ENCODE measurements at regions of chr2 and their contacts with region 1.

Region 1: DNA sequence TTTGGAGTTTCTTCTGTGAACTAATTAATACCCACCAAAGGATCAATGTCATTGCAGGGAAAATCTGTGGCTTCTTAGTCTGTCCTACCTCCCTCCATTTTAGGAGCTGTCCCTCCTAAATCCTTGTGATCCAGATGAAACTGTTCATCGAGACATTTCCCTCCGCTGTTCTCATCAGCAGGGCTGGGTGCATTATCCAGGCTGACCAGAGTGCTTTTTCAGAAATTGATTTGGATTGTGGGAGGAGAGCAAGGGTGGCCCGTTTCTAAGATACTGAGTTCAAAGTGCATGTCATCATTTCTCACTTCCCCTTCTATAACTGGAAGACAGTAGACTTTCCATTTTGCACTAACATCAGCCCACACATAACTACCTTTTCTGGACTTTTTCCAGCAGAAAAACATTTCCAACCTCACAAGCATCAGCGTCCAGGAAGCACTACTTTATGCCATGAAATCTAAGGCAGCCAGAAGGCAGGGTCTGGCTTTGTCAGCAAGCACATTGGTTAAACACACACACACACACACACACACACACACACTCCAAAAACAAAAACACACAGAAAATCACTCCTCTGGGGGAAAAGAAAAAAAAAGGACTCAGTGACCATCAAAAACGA is 94.1 kb downstream of the ANKRD44 start:
- DNase-seq: no peak
- H3K4me3 Mint-ChIP-seq: peak overlapping the region; percentile 62
- H3K27ac Mint-ChIP-seq: peak overlapping the region; percentile 94
- H3K4me1 Mint-ChIP-seq: peaks cover 86% of the 10 kb centered on the region
- H3K27me3 Mint-ChIP-seq: no peaks in the 10 kb centered on the region

Region 2: GRCh38 chr2:196160101-196160500 is 1056.4 kb before region 1 on chr2:
- CTCF ChIA-PET with region 1: no interaction called
- POLR2A ChIA-PET with region 1: no interaction called
- intact Hi-C with region 1: loop called (anchors 10 kb)
- DNase-seq: peak; percentile 76
- H3K4me3 Mint-ChIP-seq: peak overlapping the region; percentile 39
- H3K27ac Mint-ChIP-seq: peak overlapping the region; percentile 96
- H3K4me1 Mint-ChIP-seq: peaks cover 77% of the 10 kb centered on the region
- H3K27me3 Mint-ChIP-seq: no peaks in the 10 kb centered on the region

Region 3: DNA sequence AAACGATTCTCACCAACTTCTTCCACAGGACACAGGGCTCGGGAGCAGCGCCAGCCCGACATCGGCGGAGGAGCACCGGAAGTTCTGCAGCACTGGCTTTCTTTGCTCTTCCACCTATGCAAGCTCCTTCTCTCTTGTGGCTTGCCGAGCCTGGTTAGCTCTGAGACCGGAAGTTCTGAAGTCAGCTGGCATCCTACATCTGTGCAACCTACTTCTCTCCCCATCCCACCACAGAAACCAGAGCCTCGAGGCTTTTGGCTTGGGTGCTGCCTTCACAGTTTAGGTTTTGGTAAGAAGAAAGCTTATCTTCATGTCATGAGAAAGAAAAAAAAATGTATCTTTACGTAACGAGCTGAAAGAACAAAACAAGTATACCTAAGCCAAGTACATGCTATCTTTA is 17.6 kb before region 1 on chr2:
- CTCF ChIA-PET with region 1: interaction called, 7 read pairs
- POLR2A ChIA-PET with region 1: interaction called, 10 read pairs
- intact Hi-C with region 1: loop called (anchors 2 kb)
- DNase-seq: peak; percentile 95
- H3K4me3 Mint-ChIP-seq: peak overlapping the region; percentile 80
- H3K27ac Mint-ChIP-seq: peak overlapping the region; percentile 93
- H3K4me1 Mint-ChIP-seq: peaks cover 90% of the 10 kb centered on the region
- H3K27me3 Mint-ChIP-seq: no peaks in the 10 kb centered on the region

Region 4: GRCh38 chr2:197229509-197230443 is 13.3 kb after region 1 on chr2:
- CTCF ChIA-PET with region 1: interaction called, 4 read pairs
- POLR2A ChIA-PET with region 1: interaction called, 5 read pairs
- intact Hi-C with region 1: loop called (anchors 1 kb)
- DNase-seq: no peak
- H3K4me3 Mint-ChIP-seq: no peak overlapping the region
- H3K27ac Mint-ChIP-seq: peak overlapping the region; percentile 67
- H3K4me1 Mint-ChIP-seq: peaks cover 80% of the 10 kb centered on the region
- H3K27me3 Mint-ChIP-seq: no peaks in the 10 kb centered on the region

Region 5: GRCh38 chr2:197239434-197239833 is 23.0 kb after region 1 on chr2:
- CTCF ChIA-PET with region 1: interaction called, 4 read pairs
- POLR2A ChIA-PET with region 1: interaction called, 16 read pairs
- intact Hi-C with region 1: loop called (anchors 1 kb)
- DNase-seq: no peak
- H3K4me3 Mint-ChIP-seq: peak overlapping the region; percentile 78
- H3K27ac Mint-ChIP-seq: peak overlapping the region; percentile 92
- H3K4me1 Mint-ChIP-seq: peaks cover 83% of the 10 kb centered on the region
- H3K27me3 Mint-ChIP-seq: no peaks in the 10 kb centered on the region

Region 6: DNA sequence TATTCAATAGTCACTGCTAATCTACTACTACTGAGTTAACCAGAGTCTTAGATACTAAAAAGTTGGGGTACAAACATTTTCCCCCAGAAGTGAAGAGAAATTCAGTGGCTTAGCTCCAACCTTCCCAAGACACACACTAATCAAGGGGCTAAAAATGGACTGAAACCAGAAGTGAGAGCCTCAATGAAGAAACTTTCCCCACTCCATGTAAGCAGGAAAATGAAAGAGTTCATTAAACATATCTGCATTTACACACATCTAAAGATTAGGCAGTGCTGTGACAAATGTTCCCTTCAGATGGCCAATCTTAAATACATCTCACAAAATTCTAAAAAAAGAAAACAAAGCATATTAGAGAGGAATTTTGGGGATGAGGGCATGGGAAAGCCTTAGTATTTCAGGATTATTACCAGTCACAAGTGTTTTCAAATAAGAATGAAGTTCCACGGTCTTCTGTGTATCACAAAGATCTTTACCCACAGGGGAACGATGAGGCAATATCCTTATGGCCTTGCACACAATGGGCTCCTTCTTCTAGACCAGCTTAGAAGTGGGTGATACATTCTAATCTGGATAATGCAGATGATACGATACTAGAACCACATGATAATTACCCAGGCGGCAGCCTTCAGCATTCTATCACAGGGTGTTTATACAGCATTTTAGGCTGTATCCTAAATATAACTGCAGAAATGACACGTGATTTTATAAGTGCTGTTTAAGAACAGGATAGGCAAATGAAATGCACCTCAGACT is 77.0 kb after region 1 on chr2:
- CTCF ChIA-PET with region 1: no interaction called
- POLR2A ChIA-PET with region 1: interaction called, 4 read pairs
- intact Hi-C with region 1: loop called (anchors 1 kb)
- DNase-seq: peak; percentile 41
- H3K4me3 Mint-ChIP-seq: peak overlapping the region; percentile 74
- H3K27ac Mint-ChIP-seq: peak overlapping the region; percentile 100
- H3K4me1 Mint-ChIP-seq: peaks cover 89% of the 10 kb centered on the region
- H3K27me3 Mint-ChIP-seq: no peaks in the 10 kb centered on the region

Region 7: DNA sequence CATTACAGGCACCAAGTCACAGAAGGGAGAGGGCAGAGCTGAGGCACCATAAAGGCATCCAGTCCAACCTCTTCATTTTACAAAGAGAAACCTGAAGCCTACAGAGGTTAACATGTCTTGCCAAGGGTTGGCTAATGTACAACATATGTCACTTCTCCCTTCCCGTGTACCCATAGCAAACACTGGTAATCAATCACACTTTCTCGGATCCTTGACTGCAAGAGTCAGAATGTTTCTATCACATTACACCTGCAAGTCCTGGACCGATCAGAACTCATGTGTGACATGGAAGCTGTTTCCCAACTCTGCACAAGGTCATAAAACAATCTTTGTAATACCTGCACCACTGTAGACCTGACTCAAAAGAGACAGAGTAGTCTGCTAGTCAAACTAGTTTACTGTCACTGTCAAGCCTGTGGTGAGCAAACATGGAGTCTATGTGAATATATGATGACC is 88.1 kb after region 1 on chr2:
- CTCF ChIA-PET with region 1: interaction called, 4 read pairs
- POLR2A ChIA-PET with region 1: interaction called, 7 read pairs
- intact Hi-C with region 1: loop called (anchors 1 kb)
- DNase-seq: peak; percentile 62
- H3K4me3 Mint-ChIP-seq: peak overlapping the region; percentile 95
- H3K27ac Mint-ChIP-seq: peak overlapping the region; percentile 99
- H3K4me1 Mint-ChIP-seq: peaks cover 83% of the 10 kb centered on the region
- H3K27me3 Mint-ChIP-seq: no peaks in the 10 kb centered on the region